Brain microvascular endothelial cell (primary cell): ENCODE measurements at regions of chr11 and their contacts with region 1.

Region 1: DNA sequence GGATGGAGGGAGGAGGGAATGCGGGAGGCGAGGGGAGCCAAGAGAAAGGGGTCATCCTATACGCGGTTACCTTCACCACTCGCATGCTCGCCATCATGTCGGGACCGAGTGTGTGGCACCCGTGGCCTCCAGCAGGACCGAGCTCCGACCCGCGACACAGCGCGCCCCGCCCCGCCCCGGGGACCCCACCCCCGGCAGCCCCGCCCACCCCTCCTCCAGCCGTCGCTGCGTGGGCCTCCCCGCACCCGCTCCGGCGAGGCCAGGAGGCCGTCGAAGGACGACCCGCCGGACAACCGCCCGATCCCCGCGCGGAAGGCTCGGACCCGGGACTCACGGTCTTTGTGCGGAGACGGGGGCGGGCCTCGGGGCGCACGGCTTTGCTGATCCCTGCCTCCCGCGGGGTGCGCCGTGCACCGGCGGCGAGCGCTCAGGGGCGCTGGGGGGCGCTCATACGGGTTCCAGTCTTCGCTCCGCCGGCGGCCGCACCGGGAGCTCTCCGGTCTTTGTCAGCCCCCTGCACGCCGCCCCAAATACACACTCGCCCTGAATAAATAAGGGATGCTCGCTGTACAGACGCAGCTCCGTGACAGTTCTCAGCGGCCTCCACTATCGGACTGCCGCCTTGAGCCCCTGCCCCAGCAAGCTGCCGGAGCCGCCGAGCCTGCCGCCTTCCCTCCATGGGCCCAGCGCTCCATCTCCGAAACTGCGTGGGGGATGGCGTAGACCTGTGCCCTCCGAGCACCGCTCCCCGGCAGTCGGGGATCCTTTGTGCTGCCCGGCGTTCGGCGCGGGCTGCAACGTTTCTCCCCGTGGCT is at the start of gene UBE2L6:
- DNase-seq: no peak
- H3K4me3 ChIP-seq: peak within 1 kb of the TSS; percentile 83
- H3K27ac ChIP-seq: no peak within 1 kb of the TSS
- H3K27me3 ChIP-seq: no peaks in the 10 kb centered on the region
- CTCF ChIP-seq: no peak

Region 2: GRCh38 chr11:57460758-57461749 is 106.7 kb before region 1 on chr11:
- in situ Hi-C with region 1: no loop called
- DNase-seq: no peak
- H3K4me3 ChIP-seq: peak overlapping the region; percentile 20
- H3K27ac ChIP-seq: no peak overlapping the region
- H3K27me3 ChIP-seq: peaks cover 47% of the 10 kb centered on the region
- CTCF ChIP-seq: no peak

Region 3: DNA sequence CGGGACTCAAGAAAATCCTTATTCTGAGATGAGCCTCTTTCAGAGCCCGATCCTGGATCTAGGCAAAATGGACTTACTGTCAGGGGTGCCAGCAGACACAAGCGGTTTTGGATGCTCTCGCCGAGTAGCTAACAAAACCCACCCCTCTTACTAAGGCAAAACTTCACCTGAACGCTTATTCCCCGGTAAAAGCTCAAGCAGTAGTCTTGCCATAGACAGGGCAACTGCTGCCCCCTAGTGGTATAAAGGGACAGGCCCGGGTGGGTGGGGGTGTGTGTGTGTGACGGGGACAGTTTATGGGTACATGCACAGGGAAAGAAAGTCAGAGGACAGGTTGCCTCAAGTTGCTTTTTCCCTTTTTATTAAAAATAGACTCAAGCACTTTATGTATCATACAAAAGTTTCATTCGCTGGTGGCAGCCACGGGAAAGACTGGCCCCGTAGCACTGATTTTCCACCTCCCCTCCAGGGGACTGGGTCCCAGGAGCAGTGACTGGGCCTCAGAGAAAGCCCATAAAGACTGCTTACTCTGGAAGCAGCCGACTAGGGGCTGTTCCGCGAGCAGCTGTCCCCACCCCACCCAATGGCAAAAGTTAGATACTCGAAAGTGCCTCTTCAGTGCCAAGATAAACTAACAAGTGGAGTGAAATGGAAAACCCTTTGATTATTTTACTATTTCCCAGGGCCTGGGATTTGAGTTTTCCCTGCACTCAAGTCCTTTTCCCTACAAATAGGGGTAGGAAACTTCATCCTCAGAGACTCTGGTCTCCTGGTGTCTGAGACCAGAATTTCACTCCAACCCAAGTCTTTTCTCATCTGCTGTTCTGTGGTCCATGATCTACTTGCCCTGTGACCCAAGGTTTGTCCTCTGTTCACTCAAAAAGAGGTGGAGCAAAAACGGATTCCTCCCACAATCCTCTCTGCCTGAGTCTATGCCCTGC is 77.3 kb after region 1 on chr11:
- in situ Hi-C with region 1: loop called (anchors 10 kb)
- DNase-seq: peak; percentile 62
- H3K4me3 ChIP-seq: no peak overlapping the region
- H3K27ac ChIP-seq: no peak overlapping the region
- H3K27me3 ChIP-seq: peaks cover 20% of the 10 kb centered on the region
- CTCF ChIP-seq: peak; percentile 92